Heart right ventricle (tissue), 16 donors: ENCODE measurements at regions of chr13 and their contacts with region 1.

Region 1: DNA sequence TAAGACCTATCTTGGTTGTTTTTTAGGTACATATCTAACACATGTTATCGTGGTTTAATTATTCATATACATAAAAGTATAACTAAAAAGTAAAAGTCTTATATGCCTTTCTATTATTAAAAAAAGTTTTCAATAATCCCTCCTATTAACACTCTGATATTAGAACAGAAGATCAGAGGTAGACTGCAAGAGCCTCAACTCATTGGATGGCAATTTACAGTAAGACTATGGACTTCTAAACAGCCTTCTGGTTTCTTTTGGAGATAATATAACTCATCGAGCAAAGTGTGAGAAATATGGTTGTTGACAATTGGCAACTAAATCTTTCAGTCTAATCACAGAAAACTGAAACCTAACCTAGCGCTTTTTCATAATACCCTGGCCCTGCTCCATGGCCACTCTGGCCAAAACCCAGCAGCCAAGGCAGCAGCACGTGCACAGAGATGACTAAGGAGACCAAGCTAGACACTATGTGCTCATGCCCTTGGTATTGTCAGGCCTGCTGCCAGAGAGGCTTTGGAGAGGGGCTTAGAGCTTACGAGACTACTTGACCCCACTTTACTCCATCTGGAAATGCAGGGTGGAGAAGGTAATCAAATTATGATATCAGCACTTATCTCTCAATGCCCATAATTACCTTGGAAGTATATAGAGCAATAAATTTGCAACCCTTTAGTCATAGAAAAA is 40.6 kb upstream of the EEF1AKMT1 start:
- DNase-seq: peak; percentile 82 to 83
- ATAC-seq: peak; percentile 92 to 98 (median 96)
- H3K4me3 ChIP-seq: peak overlapping the region in 1 of 10 donors; percentile 2
- H3K27ac ChIP-seq: peak overlapping the region in 9 of 10 donors; percentile 30 to 81 (median 75)
- H3K4me1 ChIP-seq: peaks cover 0 to 58% (median 36%) of the 10 kb centered on the region in 9 donors
- H3K27me3 ChIP-seq: no peaks in the 10 kb centered on the region
- CTCF ChIP-seq: no peak

Region 2: GRCh38 chr13:20773194-20774080 is 40.9 kb before region 1 on chr13 and contains the start of gene EEF1AKMT1:
- intact Hi-C with region 1: loop called in 1 of 10 experiments (anchors 5 kb)
- DNase-seq: peak; percentile 92 to 97
- ATAC-seq: peak; percentile 97 to 100 (median 99)
- H3K4me3 ChIP-seq: peak within 1 kb of the TSS; percentile 52 to 86 (median 66)
- H3K27ac ChIP-seq: peak within 1 kb of the TSS; percentile 85 to 95 (median 89)
- H3K4me1 ChIP-seq: peaks cover 0 to 15% (median 9%) of the 10 kb centered on the region in 9 donors
- H3K27me3 ChIP-seq: no peaks in the 10 kb centered on the region
- CTCF ChIP-seq: no peak
- total RNA-seq, gene EEF1AKMT1: 6.1 to 9.9 (median 7.9) TPM

Region 3: DNA sequence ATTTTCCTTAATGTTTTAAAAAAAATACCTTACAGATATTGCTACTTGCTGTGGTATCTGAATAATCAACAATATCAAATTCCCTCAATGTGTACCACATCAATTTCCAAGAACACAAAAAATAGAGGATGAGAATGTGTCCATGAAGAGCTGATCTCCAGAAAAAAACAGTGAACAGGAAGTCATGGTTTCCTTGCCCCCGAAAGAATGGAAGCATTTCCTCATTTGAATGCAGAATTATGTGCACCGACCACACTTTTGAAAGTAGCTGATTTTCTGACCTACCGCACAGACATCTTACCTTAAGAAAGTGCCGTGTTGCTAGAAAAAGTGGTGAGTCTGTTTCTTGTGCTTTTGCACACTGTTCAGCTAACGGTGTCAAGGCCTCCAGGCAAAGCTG is 27.2 kb before region 1 on chr13:
- intact Hi-C with region 1: no loop called
- DNase-seq: no peak
- ATAC-seq: no peak
- H3K4me3 ChIP-seq: no peak overlapping the region
- H3K27ac ChIP-seq: peak overlapping the region in 1 of 10 donors; percentile 12
- H3K4me1 ChIP-seq: peaks cover 0 to 13% (median 0%) of the 10 kb centered on the region in 9 donors
- H3K27me3 ChIP-seq: no peaks in the 10 kb centered on the region
- CTCF ChIP-seq: no peak

Region 4: GRCh38 chr13:20828539-20829364 is 14.4 kb after region 1 on chr13:
- intact Hi-C with region 1: loop called in 1 of 10 experiments (anchors 2 kb)
- DNase-seq: peak in 1 of 2 donors; percentile 52
- ATAC-seq: peak in 6 of 8 donors; percentile 24 to 68 (median 51)
- H3K4me3 ChIP-seq: peak overlapping the region in 7 of 10 donors; percentile 14 to 43 (median 33)
- H3K27ac ChIP-seq: peak overlapping the region in 9 of 10 donors; percentile 1 to 82 (median 66)
- H3K4me1 ChIP-seq: peaks cover 0 to 22% (median 10%) of the 10 kb centered on the region in 9 donors
- H3K27me3 ChIP-seq: no peaks in the 10 kb centered on the region
- CTCF ChIP-seq: peak; percentile 55 to 87 (median 79)